ENCODE measurements at regions of chr10 and their contacts with region 1.

Region 1: GRCh38 chr10:110279407-110279986 is 25.2 kb downstream of the SMNDC1 start:
- DNase-seq: no peak
- H3K4me3 ChIP-seq: peak overlapping the region; percentile 30
- H3K27ac ChIP-seq: peak overlapping the region; percentile 67
- H3K4me1 ChIP-seq: peaks cover 65% of the 10 kb centered on the region
- H3K27me3 ChIP-seq: no peaks in the 10 kb centered on the region
- CTCF ChIP-seq: peak; percentile 83

Region 2: GRCh38 chr10:109883859-109884771 is 395.4 kb before region 1 on chr10:
- intact Hi-C with region 1: loop called (anchors 10 kb)
- DNase-seq: peak; percentile 65
- H3K4me3 ChIP-seq: peak overlapping the region; percentile 31
- H3K27ac ChIP-seq: peak overlapping the region; percentile 71
- H3K4me1 ChIP-seq: peaks cover 44% of the 10 kb centered on the region
- H3K27me3 ChIP-seq: no peaks in the 10 kb centered on the region
- CTCF ChIP-seq: peak; percentile 100

Region 3: DNA sequence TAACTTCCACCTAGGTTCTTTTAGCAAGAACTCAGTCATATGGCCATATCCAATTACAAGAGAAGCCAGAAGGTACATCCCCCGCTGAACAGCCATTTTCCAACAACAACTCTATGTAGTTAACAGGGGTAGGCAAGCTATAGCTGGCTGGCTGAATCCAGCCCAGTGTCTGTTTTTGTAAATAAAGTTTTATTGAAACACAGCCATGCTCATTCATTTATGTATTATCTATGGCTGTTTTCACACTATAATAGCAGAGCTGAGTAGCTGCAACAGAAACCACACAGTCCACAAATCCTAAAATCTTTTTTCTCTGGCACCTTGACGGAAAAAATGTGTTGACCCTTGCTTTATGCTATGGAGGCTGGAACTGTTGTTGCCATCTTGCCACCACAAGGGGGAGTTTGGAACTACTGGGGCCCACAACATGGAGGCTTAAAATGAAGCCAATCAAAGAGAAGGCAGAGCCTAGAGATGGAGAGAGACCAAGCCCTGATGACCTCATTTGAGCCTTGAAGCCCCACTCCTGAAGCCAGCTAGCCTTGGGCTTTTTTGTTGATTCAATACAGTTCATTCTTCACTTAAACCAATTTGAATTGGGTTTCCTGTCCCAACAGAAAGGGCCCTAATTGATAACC is 322.9 kb before region 1 on chr10:
- intact Hi-C with region 1: no loop called
- DNase-seq: no peak
- H3K4me3 ChIP-seq: no peak overlapping the region
- H3K27ac ChIP-seq: no peak overlapping the region
- H3K4me1 ChIP-seq: peaks cover 11% of the 10 kb centered on the region
- H3K27me3 ChIP-seq: no peaks in the 10 kb centered on the region
- CTCF ChIP-seq: peak; percentile 51

Region 4: GRCh38 chr10:110137142-110137545 is 142.4 kb before region 1 on chr10:
- intact Hi-C with region 1: loop called (anchors 2 kb)
- DNase-seq: no peak
- H3K4me3 ChIP-seq: no peak overlapping the region
- H3K27ac ChIP-seq: peak overlapping the region; percentile 61
- H3K4me1 ChIP-seq: peaks cover 32% of the 10 kb centered on the region
- H3K27me3 ChIP-seq: no peaks in the 10 kb centered on the region
- CTCF ChIP-seq: peak; percentile 84

Region 5: DNA sequence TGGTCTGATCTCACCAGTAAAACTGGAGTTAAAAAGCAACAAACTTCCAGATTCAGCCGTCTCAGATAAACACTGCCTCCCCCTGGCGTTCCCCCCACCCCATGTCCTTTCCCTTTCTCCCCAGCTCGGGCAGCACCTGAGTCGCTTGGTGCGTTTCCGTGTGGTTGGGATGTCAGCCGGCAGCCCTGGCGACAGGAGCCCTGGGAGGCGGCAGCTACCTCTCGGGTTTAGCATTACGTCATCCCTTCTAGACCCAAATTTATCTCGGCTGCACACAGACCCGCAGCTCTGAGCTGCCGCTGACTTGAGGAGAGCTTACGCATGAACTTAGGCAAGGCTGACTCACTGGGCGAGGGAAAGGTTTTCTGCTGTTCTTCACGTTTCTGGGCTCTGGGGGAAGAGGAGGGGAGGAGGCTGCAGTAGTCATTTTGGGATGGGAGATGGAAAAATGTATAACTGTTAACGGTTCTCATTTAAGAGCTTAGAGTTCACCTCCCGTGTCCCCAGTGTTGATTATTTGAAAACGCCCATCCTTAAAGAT is 57.7 kb before region 1 on chr10:
- intact Hi-C with region 1: loop called (anchors 5 kb)
- DNase-seq: peak; percentile 77
- H3K4me3 ChIP-seq: peak overlapping the region; percentile 62
- H3K27ac ChIP-seq: peak overlapping the region; percentile 93
- H3K4me1 ChIP-seq: peaks cover 74% of the 10 kb centered on the region
- H3K27me3 ChIP-seq: no peaks in the 10 kb centered on the region
- CTCF ChIP-seq: peak; percentile 33

Region 6: GRCh38 chr10:110414563-110415309 is 135.2 kb after region 1 on chr10:
- intact Hi-C with region 1: no loop called
- DNase-seq: no peak
- H3K4me3 ChIP-seq: no peak overlapping the region
- H3K27ac ChIP-seq: peak overlapping the region; percentile 58
- H3K4me1 ChIP-seq: peaks cover 49% of the 10 kb centered on the region
- H3K27me3 ChIP-seq: no peaks in the 10 kb centered on the region
- CTCF ChIP-seq: no peak